ENCODE measurements at regions of chr2 and their contacts with region 1.

Region 1: DNA sequence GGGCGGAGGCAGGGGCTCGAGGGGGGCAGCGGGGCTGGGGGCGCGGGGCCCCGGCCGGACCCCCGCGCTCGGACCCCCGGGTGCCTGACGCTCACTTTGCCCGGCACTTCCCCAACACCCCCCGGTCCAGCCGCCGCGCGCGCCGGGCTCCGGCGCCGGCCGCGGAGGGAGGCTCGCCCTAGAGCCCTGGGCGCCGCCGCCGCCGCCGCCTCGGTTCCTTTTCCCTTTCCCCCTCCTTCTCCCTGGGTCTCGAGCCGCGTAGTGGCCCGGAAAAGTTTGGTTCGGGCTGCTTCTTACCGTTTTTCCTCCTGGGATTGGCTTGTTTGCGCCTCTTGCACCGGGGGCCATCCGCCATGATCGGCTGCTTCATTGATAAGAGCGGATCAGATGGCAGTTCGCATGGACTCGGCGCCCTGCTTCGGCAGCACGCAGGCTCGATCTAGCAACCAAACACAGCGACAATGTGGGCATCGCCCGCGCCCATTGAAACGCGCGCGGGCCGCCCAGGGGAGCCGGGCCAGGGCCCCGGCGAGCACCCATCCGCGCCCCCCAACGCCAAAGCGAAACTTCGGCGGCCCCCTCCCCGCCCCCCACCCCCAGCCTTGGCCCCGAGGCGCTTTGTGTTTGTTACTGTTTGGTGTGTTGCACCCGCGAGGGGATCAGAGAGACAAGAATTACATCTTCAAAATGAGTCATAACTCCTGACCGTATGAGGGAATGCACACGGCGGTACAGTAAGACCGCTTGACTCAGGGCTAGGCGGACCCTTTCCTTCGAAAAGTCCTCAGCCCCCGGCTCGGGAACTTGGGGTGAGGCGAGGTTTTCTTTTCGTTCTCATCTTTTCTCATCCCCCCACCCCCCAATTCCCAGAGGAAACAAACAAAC is 2.7 kb downstream of the ZEB2 start:
- DNase-seq: peak; percentile 83
- H3K4me3 ChIP-seq: peak overlapping the region; percentile 89 to 94 (median 90)
- H3K27ac ChIP-seq: peak overlapping the region; percentile 97
- H3K4me1 ChIP-seq: peaks cover 57% of the 10 kb centered on the region
- H3K27me3 ChIP-seq: no peaks in the 10 kb centered on the region
- CTCF ChIP-seq: no peak
- POLR2A ChIP-seq: peak; percentile 60

Region 2: GRCh38 chr2:143513081-143513480 is 1004.1 kb before region 1 on chr2:
- CTCF ChIA-PET with region 1: no interaction called
- POLR2A ChIA-PET with region 1: no interaction called
- dilution Hi-C with region 1: no loop called
- intact Hi-C with region 1: loop called (anchors 1 kb)
- DNase-seq: peak; percentile 61
- H3K4me3 ChIP-seq: no peak overlapping the region
- H3K27ac ChIP-seq: no peak overlapping the region
- H3K4me1 ChIP-seq: no peaks in the 10 kb centered on the region
- H3K27me3 ChIP-seq: no peaks in the 10 kb centered on the region
- CTCF ChIP-seq: peak; percentile 73 to 87
- POLR2A ChIP-seq: no peak

Region 3: GRCh38 chr2:144099746-144100438 is 417.3 kb before region 1 on chr2:
- CTCF ChIA-PET with region 1: no interaction called
- POLR2A ChIA-PET with region 1: no interaction called
- dilution Hi-C with region 1: no loop called
- intact Hi-C with region 1: loop called (anchors 10 kb)
- DNase-seq: peak; percentile 73
- H3K4me3 ChIP-seq: no peak overlapping the region
- H3K27ac ChIP-seq: peak overlapping the region; percentile 34
- H3K4me1 ChIP-seq: peaks cover 14% of the 10 kb centered on the region
- H3K27me3 ChIP-seq: no peaks in the 10 kb centered on the region
- CTCF ChIP-seq: no peak
- POLR2A ChIP-seq: no peak

Region 4: DNA sequence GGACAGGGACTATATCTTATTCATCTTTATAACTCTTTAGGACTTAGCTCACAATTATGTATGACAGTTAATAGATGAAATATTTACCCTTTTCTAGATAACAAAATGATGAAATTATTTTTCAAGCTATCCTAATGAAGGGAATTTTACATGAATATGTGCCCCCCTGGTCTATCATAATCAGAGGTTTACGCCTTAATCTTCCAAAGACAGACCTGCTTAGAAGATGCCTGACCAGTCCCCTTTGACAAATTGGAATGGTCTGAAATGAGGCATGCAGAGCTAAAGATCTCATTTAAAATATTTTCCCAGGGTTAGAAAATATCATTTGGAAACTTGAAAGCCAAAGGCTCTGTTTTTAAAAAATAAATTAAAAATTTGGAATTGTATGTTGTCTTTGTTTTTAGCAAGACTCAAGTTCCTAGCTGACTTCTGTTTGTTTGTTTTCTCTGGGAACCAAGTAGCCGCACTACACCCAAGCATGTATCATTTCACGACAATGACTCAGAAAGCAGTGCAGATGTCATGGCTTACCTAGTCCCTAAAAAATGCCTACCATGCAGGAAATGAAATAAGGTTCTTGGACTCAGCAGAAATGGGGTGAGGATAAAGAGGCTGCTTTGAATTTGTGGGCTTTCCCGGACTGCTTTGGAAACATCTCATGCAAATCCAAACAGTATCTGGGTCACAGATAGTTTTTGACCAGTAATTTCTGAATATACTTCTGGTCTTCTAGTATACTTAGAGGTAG is 159.4 kb before region 1 on chr2:
- CTCF ChIA-PET with region 1: no interaction called
- POLR2A ChIA-PET with region 1: no interaction called
- dilution Hi-C with region 1: loop called (anchors 25 kb)
- intact Hi-C with region 1: loop called (anchors 1 kb)
- DNase-seq: peak; percentile 92
- H3K4me3 ChIP-seq: no peak overlapping the region
- H3K27ac ChIP-seq: peak overlapping the region; percentile 82
- H3K4me1 ChIP-seq: peaks cover 15% of the 10 kb centered on the region
- H3K27me3 ChIP-seq: no peaks in the 10 kb centered on the region
- CTCF ChIP-seq: no peak
- POLR2A ChIP-seq: no peak

Region 5: GRCh38 chr2:144465749-144466148 is 51.5 kb before region 1 on chr2:
- CTCF ChIA-PET with region 1: no interaction called
- POLR2A ChIA-PET with region 1: no interaction called
- dilution Hi-C with region 1: no loop called
- intact Hi-C with region 1: no loop called
- DNase-seq: no peak
- H3K4me3 ChIP-seq: no peak overlapping the region
- H3K27ac ChIP-seq: no peak overlapping the region
- H3K4me1 ChIP-seq: peaks cover 4% of the 10 kb centered on the region
- H3K27me3 ChIP-seq: no peaks in the 10 kb centered on the region
- CTCF ChIP-seq: no peak
- POLR2A ChIP-seq: no peak

Region 6: GRCh38 chr2:144596073-144596871 is 79.0 kb after region 1 on chr2:
- CTCF ChIA-PET with region 1: interaction called, 4 read pairs
- POLR2A ChIA-PET with region 1: no interaction called
- dilution Hi-C with region 1: no loop called
- intact Hi-C with region 1: loop called (anchors 1 kb)
- DNase-seq: peak; percentile 89
- H3K4me3 ChIP-seq: no peak overlapping the region
- H3K27ac ChIP-seq: peak overlapping the region; percentile 71
- H3K4me1 ChIP-seq: peaks cover 38% of the 10 kb centered on the region
- H3K27me3 ChIP-seq: no peaks in the 10 kb centered on the region
- CTCF ChIP-seq: no peak
- POLR2A ChIP-seq: no peak

Region 7: GRCh38 chr2:145137211-145137610 is 620.0 kb after region 1 on chr2:
- CTCF ChIA-PET with region 1: interaction called, 4 read pairs
- POLR2A ChIA-PET with region 1: no interaction called
- dilution Hi-C with region 1: no loop called
- intact Hi-C with region 1: loop called (anchors 5 kb)
- DNase-seq: no peak
- H3K4me3 ChIP-seq: no peak overlapping the region
- H3K27ac ChIP-seq: no peak overlapping the region
- H3K4me1 ChIP-seq: peaks cover 7% of the 10 kb centered on the region
- H3K27me3 ChIP-seq: no peaks in the 10 kb centered on the region
- CTCF ChIP-seq: no peak
- POLR2A ChIP-seq: no peak

Region 8: GRCh38 chr2:145984541-145984940 is 1467.3 kb after region 1 on chr2:
- CTCF ChIA-PET with region 1: no interaction called
- POLR2A ChIA-PET with region 1: no interaction called
- dilution Hi-C with region 1: no loop called
- intact Hi-C with region 1: loop called (anchors 10 kb)
- DNase-seq: peak; percentile 91
- H3K4me3 ChIP-seq: no peak overlapping the region
- H3K27ac ChIP-seq: peak overlapping the region; percentile 40
- H3K4me1 ChIP-seq: peaks cover 24% of the 10 kb centered on the region
- H3K27me3 ChIP-seq: no peaks in the 10 kb centered on the region
- CTCF ChIP-seq: no peak
- POLR2A ChIP-seq: no peak

Measured in endothelial cell of umbilical vein (primary cell).